ENCODE measurements at regions of chr1 and their contacts with region 1.

Region 1: GRCh38 chr1:167721617-167722151 is at the start of gene MPZL1:
- DNase-seq: peak; percentile 94
- ATAC-seq: peak; percentile 99
- H3K4me3 Mint-ChIP-seq: peak within 1 kb of the TSS; percentile 85
- H3K27ac Mint-ChIP-seq: peak within 1 kb of the TSS; percentile 80
- H3K4me1 Mint-ChIP-seq: peaks cover 48% of the 10 kb centered on the region
- H3K27me3 Mint-ChIP-seq: no peaks in the 10 kb centered on the region
- CTCF ChIP-seq: no peak
- total RNA-seq, gene MPZL1: 14.8 to 15.4 TPM

Region 2: GRCh38 chr1:167683641-167684502 is 37.8 kb before region 1 on chr1:
- CTCF ChIA-PET with region 1: no interaction called
- POLR2A ChIA-PET with region 1: no interaction called
- intact Hi-C with region 1: no loop called
- DNase-seq: no peak
- ATAC-seq: no peak
- H3K4me3 Mint-ChIP-seq: no peak overlapping the region
- H3K27ac Mint-ChIP-seq: peak overlapping the region; percentile 56
- H3K4me1 Mint-ChIP-seq: peaks cover 23% of the 10 kb centered on the region
- H3K27me3 Mint-ChIP-seq: no peaks in the 10 kb centered on the region
- CTCF ChIP-seq: no peak

Region 3: DNA sequence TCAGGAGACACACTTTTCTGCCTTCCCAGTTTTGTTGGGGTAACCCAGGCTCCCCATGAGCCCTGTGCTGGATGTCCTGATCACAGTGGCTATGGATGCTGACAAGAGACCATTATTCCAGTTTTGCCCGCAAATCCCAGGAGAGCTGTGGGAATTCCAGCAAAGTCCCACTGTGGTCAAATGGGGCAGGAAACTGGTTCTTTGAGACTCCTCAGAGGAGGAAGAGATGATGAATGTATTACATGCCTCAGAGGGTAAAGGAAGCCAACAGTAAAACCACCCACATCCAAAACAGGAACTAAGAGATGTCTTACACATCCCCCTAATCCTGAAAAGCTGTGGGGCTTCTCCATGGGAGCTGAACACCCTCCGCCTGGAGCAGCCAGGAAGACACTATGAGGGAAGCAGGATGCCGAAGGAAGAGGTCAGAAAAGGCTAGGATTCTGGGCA is 12.7 kb before region 1 on chr1:
- CTCF ChIA-PET with region 1: no interaction called
- POLR2A ChIA-PET with region 1: no interaction called
- intact Hi-C with region 1: no loop called
- DNase-seq: no peak
- ATAC-seq: no peak
- H3K4me3 Mint-ChIP-seq: no peak overlapping the region
- H3K27ac Mint-ChIP-seq: peak overlapping the region; percentile 67
- H3K4me1 Mint-ChIP-seq: peaks cover 21% of the 10 kb centered on the region
- H3K27me3 Mint-ChIP-seq: no peaks in the 10 kb centered on the region
- CTCF ChIP-seq: no peak

Region 4: DNA sequence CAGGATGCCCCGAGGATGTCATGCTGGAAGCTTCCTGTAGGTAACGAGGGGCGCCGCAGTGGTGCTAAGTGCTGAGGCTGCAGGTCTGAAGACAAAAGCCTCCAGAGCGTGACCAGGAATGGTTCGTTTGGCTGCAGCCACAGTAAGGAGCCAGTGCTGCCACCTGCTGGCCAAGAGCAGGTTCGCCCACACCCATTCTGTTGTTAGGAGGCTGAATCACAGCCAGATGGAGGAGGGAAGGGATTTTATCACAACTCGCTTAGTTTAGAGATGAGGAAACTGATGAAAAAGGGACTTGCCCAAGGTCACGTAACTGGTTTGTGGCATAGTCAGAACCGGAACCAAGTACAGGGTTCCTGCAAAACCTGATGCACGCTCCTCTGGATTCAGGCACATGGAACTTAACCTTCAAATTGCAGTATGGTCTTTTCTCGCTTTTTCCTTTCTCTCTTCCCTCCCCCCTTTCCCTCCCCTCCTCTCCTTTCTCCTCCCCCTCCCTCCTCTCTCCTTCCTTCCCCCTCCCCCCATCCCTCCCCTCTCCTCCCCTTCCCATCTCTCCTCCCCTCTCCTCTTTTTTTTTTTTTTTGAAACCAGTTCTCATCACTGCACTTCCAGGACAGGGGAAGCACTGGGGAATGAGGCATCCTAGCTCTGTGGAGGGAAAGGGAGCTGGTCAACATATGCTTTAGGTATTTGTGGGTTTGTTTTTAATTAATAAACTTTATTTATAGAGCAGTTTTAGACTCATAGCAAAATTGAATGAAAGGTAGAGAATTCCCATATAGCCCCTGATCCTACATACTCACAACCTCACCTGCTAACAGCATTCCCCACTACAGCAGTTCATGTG is 81.9 kb after region 1 on chr1:
- CTCF ChIA-PET with region 1: interaction called, 13 read pairs
- POLR2A ChIA-PET with region 1: no interaction called
- intact Hi-C with region 1: loop called (anchors 2 kb)
- DNase-seq: peak; percentile 97
- ATAC-seq: peak; percentile 94
- H3K4me3 Mint-ChIP-seq: peak overlapping the region; percentile 57
- H3K27ac Mint-ChIP-seq: peak overlapping the region; percentile 85
- H3K4me1 Mint-ChIP-seq: peaks cover 28% of the 10 kb centered on the region
- H3K27me3 Mint-ChIP-seq: no peaks in the 10 kb centered on the region
- CTCF ChIP-seq: peak; percentile 97

Region 5: DNA sequence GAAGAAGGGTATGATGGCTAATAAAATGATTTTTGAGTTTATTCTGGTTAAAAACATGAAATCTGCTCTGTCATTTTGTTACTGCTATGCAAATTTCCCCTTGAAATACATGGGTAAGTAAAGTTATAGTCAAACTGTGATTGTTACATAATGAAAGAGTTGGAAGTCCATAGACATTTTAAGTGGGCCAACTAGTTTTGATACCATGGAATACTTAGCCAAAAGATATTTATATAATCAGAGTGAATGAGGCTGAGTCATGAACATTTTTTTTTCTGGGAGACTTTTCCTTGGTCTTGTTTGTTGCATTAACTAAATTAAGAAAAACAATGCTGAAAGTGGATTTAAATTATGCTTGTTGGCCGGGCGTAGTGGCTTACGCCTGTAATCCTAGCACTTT is 273.4 kb after region 1 on chr1:
- CTCF ChIA-PET with region 1: no interaction called
- POLR2A ChIA-PET with region 1: no interaction called
- intact Hi-C with region 1: no loop called
- DNase-seq: no peak
- ATAC-seq: no peak
- H3K4me3 Mint-ChIP-seq: no peak overlapping the region
- H3K27ac Mint-ChIP-seq: no peak overlapping the region
- H3K4me1 Mint-ChIP-seq: no peaks in the 10 kb centered on the region
- H3K27me3 Mint-ChIP-seq: no peaks in the 10 kb centered on the region
- CTCF ChIP-seq: no peak